MCF 10A (cell line): ENCODE measurements at regions of chr3 and their contacts with region 1.

Region 1: GRCh38 chr3:37308247-37308646 is 133.9 kb upstream of the LRRFIP2 start:
- DNase-seq: peak; percentile 27
- H3K4me3 Mint-ChIP-seq: no peak overlapping the region
- H3K27ac Mint-ChIP-seq: no peak overlapping the region
- H3K4me1 Mint-ChIP-seq: no peaks in the 10 kb centered on the region
- H3K27me3 Mint-ChIP-seq: no peaks in the 10 kb centered on the region
- CTCF ChIP-seq: no peak

Region 2: GRCh38 chr3:37297459-37297858 is 10.8 kb before region 1 on chr3:
- CTCF ChIA-PET with region 1: interaction called, 19 read pairs
- POLR2A ChIA-PET with region 1: no interaction called
- intact Hi-C with region 1: no loop called
- DNase-seq: no peak
- H3K4me3 Mint-ChIP-seq: no peak overlapping the region
- H3K27ac Mint-ChIP-seq: no peak overlapping the region
- H3K4me1 Mint-ChIP-seq: no peaks in the 10 kb centered on the region
- H3K27me3 Mint-ChIP-seq: no peaks in the 10 kb centered on the region
- CTCF ChIP-seq: no peak